B cell (primary cell): ENCODE measurements at regions of chr6 and their contacts with region 1.

Region 1: GRCh38 chr6:53294095-53294494 is 54.7 kb downstream of the ELOVL5 start:
- DNase-seq: peak; percentile 60
- ATAC-seq: peak; percentile 39
- H3K4me3 ChIP-seq: no peak overlapping the region
- H3K4me3 Mint-ChIP-seq: no peak overlapping the region
- H3K27ac ChIP-seq: peak overlapping the region; percentile 37 to 81
- H3K27ac Mint-ChIP-seq: peak overlapping the region; percentile 90
- H3K4me1 ChIP-seq: peaks cover 86 to 93% of the 10 kb centered on the region in 2 donors
- H3K4me1 Mint-ChIP-seq: peaks cover 87% of the 10 kb centered on the region
- H3K27me3 ChIP-seq: no peaks in the 10 kb centered on the region
- H3K27me3 Mint-ChIP-seq: no peaks in the 10 kb centered on the region
- CTCF ChIP-seq: peak; percentile 83

Region 2: GRCh38 chr6:53189554-53189953 is 104.5 kb before region 1 on chr6:
- CTCF ChIA-PET with region 1: interaction called, 12 read pairs
- POLR2A ChIA-PET with region 1: interaction called, 3 read pairs
- intact Hi-C with region 1: no loop called
- DNase-seq: no peak
- ATAC-seq: no peak
- H3K4me3 ChIP-seq: no peak overlapping the region
- H3K4me3 Mint-ChIP-seq: no peak overlapping the region
- H3K27ac ChIP-seq: no peak overlapping the region
- H3K27ac Mint-ChIP-seq: no peak overlapping the region
- H3K4me1 ChIP-seq: peaks cover 50 to 51% of the 10 kb centered on the region in 2 donors
- H3K4me1 Mint-ChIP-seq: peaks cover 47% of the 10 kb centered on the region
- H3K27me3 ChIP-seq: no peaks in the 10 kb centered on the region
- H3K27me3 Mint-ChIP-seq: no peaks in the 10 kb centered on the region
- CTCF ChIP-seq: no peak

Region 3: GRCh38 chr6:53250176-53251032 is 43.7 kb before region 1 on chr6:
- CTCF ChIA-PET with region 1: interaction called, 23 read pairs
- POLR2A ChIA-PET with region 1: no interaction called
- intact Hi-C with region 1: no loop called
- DNase-seq: no peak
- ATAC-seq: peak; percentile 59
- H3K4me3 ChIP-seq: no peak overlapping the region
- H3K4me3 Mint-ChIP-seq: peak overlapping the region; percentile 8
- H3K27ac ChIP-seq: peak overlapping the region; percentile 38 to 65
- H3K27ac Mint-ChIP-seq: peak overlapping the region; percentile 84
- H3K4me1 ChIP-seq: peaks cover 53 to 59% of the 10 kb centered on the region in 2 donors
- H3K4me1 Mint-ChIP-seq: peaks cover 75% of the 10 kb centered on the region
- H3K27me3 ChIP-seq: no peaks in the 10 kb centered on the region
- H3K27me3 Mint-ChIP-seq: no peaks in the 10 kb centered on the region
- CTCF ChIP-seq: no peak

Region 4: DNA sequence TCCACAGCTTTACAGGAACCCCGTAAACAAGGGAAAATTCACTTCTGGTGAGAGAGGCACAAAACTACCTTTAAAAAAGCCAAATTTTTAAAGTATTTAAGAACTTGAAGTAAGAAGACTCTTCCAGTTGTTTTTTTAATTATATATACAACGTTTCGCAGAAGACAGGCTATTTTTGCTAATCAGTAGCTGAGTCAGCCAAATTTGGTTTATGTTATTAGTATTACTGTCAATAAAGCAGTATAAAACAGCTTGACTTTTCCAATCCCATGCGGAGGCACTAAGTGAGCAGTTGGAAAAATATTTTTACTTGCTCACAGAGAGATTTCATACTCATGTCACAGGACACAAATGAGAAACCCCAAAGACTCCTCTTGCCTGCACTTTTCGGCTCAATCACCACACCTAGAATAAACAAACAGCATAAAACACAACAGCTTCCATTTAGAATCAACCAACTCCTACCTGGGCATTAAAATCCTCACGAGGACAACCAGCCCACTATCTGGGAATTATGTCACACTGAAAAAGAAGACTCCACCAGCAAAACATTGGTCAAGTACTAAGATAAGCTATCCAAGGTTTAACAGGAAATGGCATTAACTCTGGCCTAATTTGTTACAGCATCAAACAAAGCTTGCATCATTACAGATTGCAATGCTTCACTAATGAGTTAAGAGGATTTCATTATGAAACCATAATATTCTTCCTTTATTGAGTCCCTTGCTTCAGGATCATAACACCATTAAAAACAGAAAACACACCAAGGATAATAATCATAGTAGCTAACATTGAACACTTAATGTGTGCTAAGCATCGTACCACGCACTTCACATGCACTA is 28.3 kb after region 1 on chr6:
- CTCF ChIA-PET with region 1: interaction called, 13 read pairs
- POLR2A ChIA-PET with region 1: no interaction called
- intact Hi-C with region 1: no loop called
- DNase-seq: no peak
- ATAC-seq: no peak
- H3K4me3 ChIP-seq: no peak overlapping the region
- H3K4me3 Mint-ChIP-seq: peak overlapping the region; percentile 7
- H3K27ac ChIP-seq: peak overlapping the region in 1 of 2 donors; percentile 49
- H3K27ac Mint-ChIP-seq: peak overlapping the region; percentile 76
- H3K4me1 ChIP-seq: peaks cover 48 to 51% of the 10 kb centered on the region in 2 donors
- H3K4me1 Mint-ChIP-seq: peaks cover 73% of the 10 kb centered on the region
- H3K27me3 ChIP-seq: no peaks in the 10 kb centered on the region
- H3K27me3 Mint-ChIP-seq: no peaks in the 10 kb centered on the region
- CTCF ChIP-seq: no peak

Region 5: DNA sequence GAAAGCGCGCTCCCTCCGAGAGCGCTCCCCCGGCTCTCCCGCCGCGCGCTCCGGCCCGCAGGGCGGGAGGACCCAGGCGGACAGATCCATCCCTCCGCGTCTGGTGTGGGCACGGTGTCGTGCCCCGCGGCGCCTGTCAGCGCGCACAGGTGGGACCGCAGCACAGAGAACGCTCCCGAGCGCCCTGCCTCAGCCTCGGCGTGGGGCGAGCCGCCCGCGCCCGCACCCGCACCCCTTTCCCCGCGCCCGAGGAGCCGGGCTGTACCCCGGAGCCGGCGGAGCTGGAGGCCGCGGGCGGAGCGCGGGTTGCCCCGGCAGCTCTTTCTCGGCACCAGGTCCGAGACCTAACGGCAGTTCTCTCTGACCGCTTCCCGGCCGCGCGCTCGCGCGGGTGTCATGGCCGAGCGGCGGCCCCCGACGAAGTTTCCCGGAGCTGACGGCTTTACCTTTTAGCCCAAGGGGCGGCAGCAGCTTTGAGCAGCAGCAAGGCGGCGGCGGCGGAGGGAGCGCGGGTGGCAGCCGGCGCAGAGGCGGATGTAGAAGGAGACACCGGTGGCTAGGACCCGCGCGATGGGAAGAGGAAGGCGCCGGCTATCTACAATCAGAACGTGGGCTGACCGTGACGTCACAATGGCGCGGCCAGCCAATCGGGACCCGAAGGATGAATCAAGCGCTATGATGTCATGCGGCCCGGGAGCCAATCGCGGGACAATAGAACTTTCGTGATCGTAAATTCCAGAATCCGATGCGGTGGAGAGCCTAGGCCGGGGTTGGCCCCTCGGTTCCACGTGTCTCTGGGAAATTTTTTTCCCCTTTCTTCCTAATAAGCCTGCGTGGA is 54.5 kb after region 1 on chr6 and contains the start of gene ELOVL5:
- CTCF ChIA-PET with region 1: interaction called, 15 read pairs
- POLR2A ChIA-PET with region 1: interaction called, 3 read pairs
- intact Hi-C with region 1: loop called (anchors 1 kb)
- DNase-seq: peak; percentile 99
- ATAC-seq: peak; percentile 79
- H3K4me3 ChIP-seq: peak within 1 kb of the TSS; percentile 65 to 97 (median 86)
- H3K4me3 Mint-ChIP-seq: peak within 1 kb of the TSS; percentile 94
- H3K27ac ChIP-seq: peak within 1 kb of the TSS; percentile 84 to 91
- H3K27ac Mint-ChIP-seq: peak within 1 kb of the TSS; percentile 99
- H3K4me1 ChIP-seq: peaks cover 35 to 36% of the 10 kb centered on the region in 2 donors
- H3K4me1 Mint-ChIP-seq: peaks cover 59% of the 10 kb centered on the region
- H3K27me3 ChIP-seq: no peaks in the 10 kb centered on the region
- H3K27me3 Mint-ChIP-seq: no peaks in the 10 kb centered on the region
- CTCF ChIP-seq: no peak
- total RNA-seq, gene ELOVL5: 128 and 134 TPM in 2 replicates